A673 (cell line): ENCODE measurements at regions of chr1 and their contacts with region 1.

Region 1: DNA sequence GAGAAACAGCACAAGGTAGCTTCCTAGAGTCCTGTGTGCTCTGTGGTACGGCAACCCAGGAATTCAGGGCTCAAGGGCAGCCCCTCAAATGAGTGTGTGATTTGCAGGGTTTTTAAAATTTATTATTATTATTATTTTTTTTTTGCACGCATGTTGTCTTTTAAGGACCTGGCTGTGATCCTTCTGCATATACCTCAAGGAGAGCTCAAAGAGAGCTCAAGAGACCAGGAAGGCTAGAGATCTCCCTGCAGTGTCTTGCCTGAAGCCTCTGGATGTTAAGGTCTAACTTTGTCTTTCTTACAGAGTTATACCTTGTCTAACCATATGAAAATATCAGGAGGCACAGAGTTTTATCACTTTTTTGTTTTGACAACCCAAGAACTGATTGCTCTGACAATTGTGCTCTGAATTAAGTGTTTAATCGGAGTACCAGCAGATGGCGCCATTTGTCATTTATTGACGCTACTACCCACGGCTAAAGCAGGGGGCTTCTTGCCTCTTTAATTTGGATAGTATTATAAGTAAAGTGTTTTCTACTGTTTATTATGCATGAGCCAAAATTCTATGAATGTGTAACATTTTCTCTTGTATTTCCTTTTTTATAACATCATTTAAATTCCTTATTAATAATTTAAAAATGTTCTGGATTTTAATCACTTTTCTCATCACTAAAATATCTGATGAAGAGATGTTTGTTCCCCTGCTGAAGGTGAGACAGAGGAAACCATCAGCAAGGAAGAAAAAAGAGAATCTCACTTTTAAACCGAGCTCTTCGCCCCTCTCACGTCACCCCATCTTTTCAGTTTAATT is 35.8 kb upstream of the LMO4 start:
- DNase-seq: peak; percentile 79
- H3K4me3 ChIP-seq: no peak overlapping the region
- H3K27ac ChIP-seq: no peak overlapping the region
- H3K4me1 ChIP-seq: peaks cover 7% of the 10 kb centered on the region
- H3K27me3 ChIP-seq: no peaks in the 10 kb centered on the region
- CTCF ChIP-seq: peak; percentile 83

Region 2: DNA sequence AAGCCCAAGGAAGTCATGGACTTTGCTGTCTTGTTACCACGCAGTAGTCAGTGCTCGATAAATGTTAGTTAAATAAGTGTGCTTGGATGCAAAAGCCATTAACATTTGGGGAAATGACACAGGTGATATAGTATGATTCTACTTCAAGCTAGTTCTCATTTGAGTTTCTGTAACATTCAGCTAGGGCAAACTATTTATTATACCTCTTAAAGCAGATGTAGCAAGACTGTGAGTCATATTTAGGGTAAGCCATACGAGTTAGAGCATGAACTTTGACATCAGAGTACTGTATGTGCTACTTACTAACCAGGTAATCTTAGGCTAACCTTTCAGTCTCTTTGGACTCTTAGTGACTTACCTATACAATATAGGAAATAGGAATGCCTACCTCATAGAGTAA is 725.0 kb before region 1 on chr1:
- CTCF ChIA-PET with region 1: no interaction called
- POLR2A ChIA-PET with region 1: no interaction called
- intact Hi-C with region 1: no loop called
- DNase-seq: no peak
- H3K4me3 ChIP-seq: no peak overlapping the region
- H3K27ac ChIP-seq: no peak overlapping the region
- H3K4me1 ChIP-seq: no peaks in the 10 kb centered on the region
- H3K27me3 ChIP-seq: peaks cover 22% of the 10 kb centered on the region
- CTCF ChIP-seq: no peak

Region 3: DNA sequence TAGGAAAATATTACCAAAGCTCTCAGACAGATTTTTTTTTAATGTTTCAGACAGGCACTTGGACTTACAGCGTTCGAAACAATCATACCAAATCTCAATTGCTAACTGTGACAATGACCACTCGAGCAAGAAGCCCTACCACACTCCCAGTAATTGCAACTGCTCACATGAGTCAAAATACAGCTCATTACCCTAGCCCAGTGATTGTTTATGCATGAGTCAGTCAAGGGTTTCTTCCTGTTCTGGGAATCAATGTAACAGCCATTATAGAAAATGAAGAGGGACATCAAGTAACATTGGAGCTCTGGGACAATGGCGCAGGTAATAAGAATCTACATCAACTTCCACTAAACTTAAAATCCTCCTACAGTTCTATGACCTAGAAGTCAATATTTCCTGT is 644.6 kb before region 1 on chr1:
- CTCF ChIA-PET with region 1: no interaction called
- POLR2A ChIA-PET with region 1: interaction called, 10 read pairs
- intact Hi-C with region 1: no loop called
- DNase-seq: peak; percentile 34
- H3K4me3 ChIP-seq: no peak overlapping the region
- H3K27ac ChIP-seq: no peak overlapping the region
- H3K4me1 ChIP-seq: no peaks in the 10 kb centered on the region
- H3K27me3 ChIP-seq: no peaks in the 10 kb centered on the region
- CTCF ChIP-seq: no peak

Region 4: GRCh38 chr1:88180449-88181108 is 887.7 kb after region 1 on chr1:
- CTCF ChIA-PET with region 1: no interaction called
- POLR2A ChIA-PET with region 1: no interaction called
- intact Hi-C with region 1: loop called (anchors 10 kb)
- DNase-seq: peak; percentile 84
- H3K4me3 ChIP-seq: no peak overlapping the region
- H3K27ac ChIP-seq: no peak overlapping the region
- H3K4me1 ChIP-seq: no peaks in the 10 kb centered on the region
- H3K27me3 ChIP-seq: no peaks in the 10 kb centered on the region
- CTCF ChIP-seq: peak; percentile 96

Region 5: DNA sequence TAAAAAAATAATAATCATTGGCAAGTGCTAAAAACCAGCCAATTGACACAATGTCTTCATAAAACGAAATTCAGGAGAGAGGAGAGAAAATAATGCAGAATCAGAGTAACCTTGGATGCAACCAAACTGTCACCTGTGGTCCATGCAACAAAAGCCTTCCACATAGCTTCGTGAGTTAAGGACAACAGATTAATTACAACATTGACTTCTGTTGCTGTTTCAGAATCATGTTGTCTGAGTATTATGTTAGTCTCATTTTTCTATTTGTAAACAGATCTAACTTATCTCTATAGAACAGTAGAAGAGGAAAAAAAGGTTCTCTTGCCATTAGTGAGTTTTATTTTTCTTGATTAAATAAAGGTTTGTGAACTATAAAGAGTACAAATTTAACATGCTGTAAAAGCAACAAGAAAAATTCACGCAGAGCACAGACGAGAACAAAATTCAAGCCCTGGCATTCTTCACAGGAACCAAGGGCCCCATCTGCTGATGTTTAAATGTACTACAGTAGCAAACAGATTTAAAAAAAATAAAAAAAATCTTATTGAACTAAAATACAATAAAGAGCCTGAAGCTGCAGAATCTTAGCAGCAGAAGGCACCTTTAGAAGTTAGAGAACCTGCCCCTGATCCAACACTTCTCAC is 1010.1 kb after region 1 on chr1:
- CTCF ChIA-PET with region 1: no interaction called
- POLR2A ChIA-PET with region 1: no interaction called
- intact Hi-C with region 1: loop called (anchors 10 kb)
- DNase-seq: peak; percentile 38
- H3K4me3 ChIP-seq: no peak overlapping the region
- H3K27ac ChIP-seq: no peak overlapping the region
- H3K4me1 ChIP-seq: no peaks in the 10 kb centered on the region
- H3K27me3 ChIP-seq: no peaks in the 10 kb centered on the region
- CTCF ChIP-seq: peak; percentile 60

Region 6: DNA sequence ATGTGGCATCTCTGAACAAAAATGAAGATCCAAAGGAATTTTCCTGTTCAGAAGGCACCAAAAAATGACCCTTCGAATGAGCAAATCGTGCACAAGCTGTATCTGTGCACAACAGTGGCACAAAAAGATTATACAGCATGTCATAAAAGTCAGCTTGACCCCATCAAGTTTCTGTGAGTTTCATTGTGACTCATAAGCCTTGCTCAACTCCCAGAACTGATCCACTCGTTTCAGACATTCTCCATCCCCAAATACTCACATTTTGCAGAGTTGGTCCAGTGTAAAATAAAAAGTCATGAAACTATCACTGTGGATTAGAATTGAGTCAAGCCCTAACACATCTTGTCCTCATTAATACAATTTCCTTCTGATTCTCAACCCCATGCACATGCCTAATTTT is 1216.5 kb after region 1 on chr1:
- CTCF ChIA-PET with region 1: no interaction called
- POLR2A ChIA-PET with region 1: no interaction called
- intact Hi-C with region 1: no loop called
- DNase-seq: peak; percentile 12
- H3K4me3 ChIP-seq: no peak overlapping the region
- H3K27ac ChIP-seq: no peak overlapping the region
- H3K4me1 ChIP-seq: peaks cover 46% of the 10 kb centered on the region
- H3K27me3 ChIP-seq: peaks cover 6% of the 10 kb centered on the region
- CTCF ChIP-seq: no peak

Region 7: DNA sequence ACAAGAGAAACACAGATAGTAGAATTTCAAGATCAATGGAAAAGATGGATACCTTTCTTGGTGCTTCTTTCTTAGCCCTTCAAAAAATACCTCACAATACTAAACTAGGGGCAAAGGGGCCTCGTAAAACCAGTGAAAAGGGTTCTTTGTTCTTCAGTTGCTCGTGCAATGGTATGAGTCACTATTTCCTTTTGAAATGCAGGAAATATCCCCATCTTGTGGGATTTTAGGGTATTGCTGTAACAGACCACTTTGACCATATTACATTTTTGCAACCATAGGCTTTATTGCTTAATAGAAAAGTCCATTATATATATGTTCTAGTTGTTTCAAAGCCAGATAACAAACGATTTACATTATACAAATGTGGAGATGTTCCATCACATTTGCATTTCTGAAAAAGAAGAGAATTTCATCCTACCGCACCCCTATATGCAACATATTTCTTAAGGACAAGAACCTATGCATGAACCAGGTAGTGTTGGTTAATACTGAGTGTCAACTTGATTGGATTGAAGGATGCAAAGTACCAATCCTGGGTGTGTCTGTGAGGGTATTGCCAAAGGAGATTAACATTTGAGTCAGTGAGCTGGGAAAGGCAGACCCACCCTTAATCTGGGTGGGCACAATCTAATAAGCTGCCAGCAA is 1302.6 kb after region 1 on chr1:
- CTCF ChIA-PET with region 1: no interaction called
- POLR2A ChIA-PET with region 1: no interaction called
- intact Hi-C with region 1: loop called (anchors 5 kb)
- DNase-seq: peak; percentile 70
- H3K4me3 ChIP-seq: no peak overlapping the region
- H3K27ac ChIP-seq: no peak overlapping the region
- H3K4me1 ChIP-seq: no peaks in the 10 kb centered on the region
- H3K27me3 ChIP-seq: no peaks in the 10 kb centered on the region
- CTCF ChIP-seq: peak; percentile 59